ENCODE measurements at regions of chr22 and their contacts with region 1.

Region 1: DNA sequence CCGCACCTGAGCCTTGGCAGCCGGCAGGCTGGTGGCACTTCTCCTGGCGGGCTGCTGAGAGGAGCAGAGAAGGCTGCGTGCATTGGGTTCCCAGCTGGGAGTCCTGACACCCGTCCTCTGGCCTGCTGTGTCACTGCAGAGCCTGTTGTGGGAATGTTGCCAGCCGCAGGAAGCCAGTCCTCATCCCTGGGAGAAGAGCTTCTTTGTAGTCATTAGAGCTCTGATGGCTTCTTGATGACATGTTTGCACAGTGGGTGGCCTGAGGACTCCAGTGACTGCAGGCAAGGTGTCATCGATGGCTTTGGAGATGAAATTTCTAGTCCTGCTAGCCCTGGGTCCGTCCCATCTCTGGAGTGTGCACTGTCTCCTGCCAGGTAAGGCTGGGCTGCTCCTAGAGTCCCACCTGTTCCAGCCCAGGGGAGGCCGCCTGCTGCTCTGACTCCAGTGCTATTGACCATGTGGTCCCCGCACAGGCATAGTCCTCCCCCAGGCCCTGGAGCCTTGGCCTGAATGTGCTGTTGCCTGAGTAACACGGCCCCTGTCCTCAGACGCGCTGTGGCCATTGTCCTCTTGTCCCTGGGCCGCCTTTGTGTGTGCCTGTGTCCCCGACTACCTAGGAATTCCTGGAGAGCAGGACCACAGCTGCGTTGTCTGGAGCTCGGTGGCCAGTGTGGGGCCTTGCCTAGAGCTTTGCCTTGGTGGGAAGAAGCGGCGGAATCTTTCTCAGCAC is 129.2 kb downstream of the CACNA1I start:
- DNase-seq: peak; percentile 54
- ATAC-seq: no peak

Region 2: DNA sequence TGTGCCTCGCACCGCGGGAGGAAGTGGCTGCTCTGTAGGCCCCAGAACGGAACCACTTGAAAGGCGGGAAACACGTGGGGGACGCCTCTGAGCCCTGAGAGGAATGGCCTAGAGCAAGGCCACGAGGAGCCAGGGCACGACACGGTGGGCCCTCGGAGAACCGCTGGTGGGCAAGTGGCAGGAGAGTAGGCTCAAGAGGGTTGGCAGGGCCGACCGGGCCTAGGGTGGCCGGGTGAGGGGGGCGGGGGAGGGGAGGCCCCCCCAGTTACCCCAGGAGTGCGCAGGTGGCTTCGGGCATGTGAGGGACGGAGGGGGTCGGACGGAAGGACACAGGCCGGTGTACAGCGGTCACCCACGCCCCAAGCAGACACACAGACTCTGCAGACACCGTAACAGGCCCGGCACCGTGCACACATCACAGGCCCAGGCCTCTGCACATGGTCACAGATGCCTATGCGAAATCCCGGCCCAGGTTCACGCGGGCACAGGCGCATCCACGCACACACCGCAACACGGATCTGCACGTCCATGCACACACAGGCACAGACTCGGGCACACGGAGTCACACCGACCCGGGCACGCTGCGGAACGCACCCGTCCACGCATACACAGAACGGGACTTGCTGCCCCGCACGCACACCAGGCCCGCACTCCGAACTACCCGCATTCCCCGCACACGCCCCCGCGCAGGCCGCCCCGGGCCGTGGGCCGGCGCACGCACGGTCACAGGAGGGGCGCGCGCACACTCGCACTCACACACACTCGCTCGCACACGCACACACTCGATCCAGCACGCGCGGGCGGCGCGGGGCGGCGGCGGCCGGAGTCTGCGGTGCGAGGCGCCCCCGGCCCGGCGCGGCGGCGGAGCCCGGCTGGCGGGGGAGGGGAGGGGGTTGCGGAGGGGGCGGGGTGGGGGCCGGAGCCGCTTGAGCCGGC is 243.3 kb before region 1 on chr22 and contains the start of gene MGAT3:
- intact Hi-C with region 1: no loop called
- DNase-seq: no peak
- ATAC-seq: peak; percentile 30
- total RNA-seq, gene MGAT3: 5.9 TPM

Region 3: DNA sequence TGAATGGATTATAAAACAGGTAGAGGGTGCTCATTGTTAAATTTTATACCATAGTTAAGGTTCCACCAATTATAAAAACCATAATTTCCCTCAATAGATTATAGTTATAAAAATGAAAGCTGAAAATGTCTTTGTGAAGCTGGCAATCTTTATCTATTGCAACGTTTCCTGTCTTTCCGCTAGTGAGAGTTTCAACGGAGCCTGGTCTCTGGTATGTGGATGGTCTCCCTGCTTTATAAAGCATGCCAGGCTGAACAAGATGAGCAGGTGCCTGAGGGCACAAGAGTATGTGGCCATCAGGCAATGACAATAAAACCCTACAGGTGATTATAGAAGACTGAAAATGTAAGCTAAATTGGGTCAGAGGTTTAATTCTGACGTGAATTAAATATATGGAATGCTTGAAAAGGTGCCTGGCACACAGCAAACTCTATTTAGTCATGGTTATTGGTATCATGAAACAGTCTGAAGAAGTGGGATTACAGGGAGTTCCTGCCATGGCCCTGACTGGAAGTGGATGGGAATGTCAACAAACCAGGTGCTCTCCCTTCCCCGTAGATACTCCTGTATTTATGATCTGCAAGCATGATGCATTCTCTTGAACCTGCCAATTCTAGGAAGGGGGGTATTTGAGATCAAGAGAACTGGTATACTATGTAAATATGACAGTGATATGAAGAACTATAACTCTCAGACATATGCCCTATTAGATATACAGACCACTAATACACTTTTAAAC is 78.1 kb after region 1 on chr22:
- intact Hi-C with region 1: loop called (anchors 5 kb)
- DNase-seq: no peak
- ATAC-seq: no peak